Lower leg skin (tissue), 4 donors: ENCODE measurements at regions of chr13 and their contacts with region 1.

Region 1: DNA sequence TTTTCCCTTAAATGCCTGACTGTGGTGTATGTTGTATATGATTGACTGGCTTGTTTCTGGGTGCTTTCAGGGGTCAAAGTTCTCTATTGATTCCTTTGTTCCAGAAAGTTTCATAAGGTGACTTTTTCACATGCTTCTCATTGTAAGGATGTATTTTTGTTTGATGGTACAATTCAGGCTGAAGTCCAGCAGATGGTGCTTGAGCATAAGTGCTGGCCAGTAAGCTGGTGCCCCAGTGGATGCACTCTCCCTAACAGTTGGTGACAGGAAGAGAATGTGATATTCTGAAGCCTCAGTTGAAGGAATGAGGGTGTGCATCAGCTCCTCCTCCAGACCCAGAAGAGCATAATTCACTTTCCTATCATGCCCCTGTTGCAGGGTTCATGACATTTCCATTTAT is 1941.6 kb upstream of the PRR20A start:
- DNase-seq: no peak
- H3K4me3 ChIP-seq: no peak overlapping the region
- CTCF ChIP-seq: no peak
- POLR2A ChIP-seq: no peak

Region 2: GRCh38 chr13:53445686-53446085 is 1753.4 kb before region 1 on chr13:
- intact Hi-C with region 1: loop called (anchors 5 kb)
- DNase-seq: no peak
- H3K4me3 ChIP-seq: no peak overlapping the region
- CTCF ChIP-seq: no peak
- POLR2A ChIP-seq: no peak